ENCODE measurements at regions of chr1 and their contacts with region 1.

Region 1: DNA sequence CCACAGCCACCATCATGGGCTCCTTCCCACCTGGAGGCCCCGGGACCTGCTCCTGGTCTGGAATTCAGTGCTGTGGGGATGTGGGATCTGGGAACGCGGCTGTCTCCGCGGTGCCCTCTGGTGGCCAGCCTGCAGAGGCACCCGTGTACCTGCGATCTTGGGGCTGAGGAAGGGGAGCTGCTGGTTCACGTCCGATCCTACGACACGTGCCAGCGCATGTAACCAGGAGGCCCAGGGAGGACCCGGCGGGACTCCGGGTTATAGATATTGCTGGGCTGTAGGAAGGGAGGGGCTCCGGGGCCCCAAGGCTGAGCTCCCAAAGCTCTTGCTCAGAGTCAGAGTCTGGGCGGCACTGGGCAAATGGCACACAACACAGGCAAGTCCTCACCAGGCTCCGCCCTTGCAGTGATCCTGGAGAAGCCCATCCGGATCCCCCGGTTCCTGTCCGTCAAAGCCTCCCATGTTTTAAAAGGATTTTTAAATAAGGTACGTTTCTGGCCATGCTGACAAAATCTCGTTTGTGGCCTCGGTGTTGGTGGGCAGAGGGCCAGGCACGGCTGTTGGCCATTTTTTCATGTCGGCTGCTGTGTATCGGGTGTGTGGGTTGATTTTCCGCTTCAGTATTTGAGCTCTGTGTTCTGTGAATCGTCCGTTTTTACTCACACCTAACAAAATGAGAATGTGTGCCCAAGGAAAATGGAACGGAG is 20.1 kb downstream of the FAAP20 start:
- DNase-seq: peak; percentile 42 to 70 (median 65)
- H3K4me3 ChIP-seq: peak overlapping the region in 1 of 3 experiments; percentile 50
- H3K4me3 Mint-ChIP-seq: peak overlapping the region; percentile 60 to 66
- H3K27ac ChIP-seq: no peak overlapping the region
- H3K27ac Mint-ChIP-seq: peak overlapping the region in 1 of 7 donors; percentile 59
- H3K4me1 ChIP-seq: peaks cover 14 to 15% of the 10 kb centered on the region in 2 donors
- H3K4me1 Mint-ChIP-seq: peaks cover 23% of the 10 kb centered on the region
- H3K27me3 ChIP-seq: no peaks in the 10 kb centered on the region
- H3K27me3 Mint-ChIP-seq: peaks cover 1 to 3% (median 1%) of the 10 kb centered on the region in 3 donors
- CTCF ChIP-seq: peak; percentile 94

Region 2: DNA sequence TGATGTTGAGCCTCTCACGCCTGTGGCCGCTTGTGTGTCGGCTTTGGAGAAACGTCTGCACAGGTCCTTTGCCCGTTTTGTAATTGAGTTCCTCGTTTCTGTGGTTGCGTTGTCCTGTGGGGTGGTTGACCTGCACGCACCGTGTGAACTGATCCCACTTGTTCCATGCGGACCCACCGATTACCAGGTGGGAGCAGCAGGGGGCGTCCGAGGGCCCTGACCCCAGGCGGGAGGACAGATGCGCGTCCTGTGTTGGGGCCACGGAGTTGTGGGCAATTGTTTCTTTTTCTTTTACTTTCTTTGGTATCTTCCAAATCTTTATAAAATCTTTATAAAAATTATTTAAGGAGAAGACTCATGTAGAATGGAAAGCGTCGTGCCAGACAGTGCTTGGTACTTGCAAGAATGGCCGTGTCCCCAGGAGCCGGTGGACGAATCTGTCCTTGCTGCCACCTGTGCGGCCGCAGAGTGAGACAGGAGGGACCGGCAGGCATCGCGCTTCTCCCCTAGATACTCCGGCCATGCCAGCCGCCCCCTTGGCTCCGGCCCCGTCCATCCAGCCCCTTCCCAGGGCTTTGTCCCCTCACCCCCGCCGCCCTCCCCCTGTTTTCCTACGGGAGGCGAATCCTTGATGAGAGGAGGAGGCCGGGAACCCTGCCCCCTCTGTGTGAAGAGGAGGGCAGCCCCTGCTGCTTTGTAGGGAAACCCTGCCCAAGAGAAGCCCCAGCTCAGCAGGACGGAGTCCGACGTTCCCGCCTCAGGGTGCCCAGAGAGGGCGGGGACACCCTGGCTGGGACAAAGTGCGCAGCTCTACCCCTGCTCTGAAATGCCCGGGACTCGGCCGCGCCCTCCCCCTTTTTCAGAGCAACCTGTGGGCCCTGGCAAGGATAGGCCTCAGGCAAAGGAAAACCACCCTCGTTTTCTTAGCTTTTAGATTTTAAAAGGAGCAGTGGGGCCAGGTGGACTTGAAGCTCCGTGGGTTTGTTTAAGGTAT is 82.6 kb before region 1 on chr1:
- intact Hi-C with region 1: loop called in 1 of 2 experiments (anchors 5 kb)
- DNase-seq: peak; percentile 46 to 63 (median 50)
- H3K4me3 ChIP-seq: no peak overlapping the region
- H3K4me3 Mint-ChIP-seq: peak overlapping the region in 1 of 2 donors; percentile 53
- H3K27ac ChIP-seq: no peak overlapping the region
- H3K27ac Mint-ChIP-seq: no peak overlapping the region
- H3K4me1 ChIP-seq: no peaks in the 10 kb centered on the region
- H3K4me1 Mint-ChIP-seq: peaks cover 4% of the 10 kb centered on the region
- H3K27me3 ChIP-seq: no peaks in the 10 kb centered on the region
- H3K27me3 Mint-ChIP-seq: peaks cover 2 to 3% (median 2%) of the 10 kb centered on the region in 3 donors
- CTCF ChIP-seq: peak; percentile 80

Region 3: DNA sequence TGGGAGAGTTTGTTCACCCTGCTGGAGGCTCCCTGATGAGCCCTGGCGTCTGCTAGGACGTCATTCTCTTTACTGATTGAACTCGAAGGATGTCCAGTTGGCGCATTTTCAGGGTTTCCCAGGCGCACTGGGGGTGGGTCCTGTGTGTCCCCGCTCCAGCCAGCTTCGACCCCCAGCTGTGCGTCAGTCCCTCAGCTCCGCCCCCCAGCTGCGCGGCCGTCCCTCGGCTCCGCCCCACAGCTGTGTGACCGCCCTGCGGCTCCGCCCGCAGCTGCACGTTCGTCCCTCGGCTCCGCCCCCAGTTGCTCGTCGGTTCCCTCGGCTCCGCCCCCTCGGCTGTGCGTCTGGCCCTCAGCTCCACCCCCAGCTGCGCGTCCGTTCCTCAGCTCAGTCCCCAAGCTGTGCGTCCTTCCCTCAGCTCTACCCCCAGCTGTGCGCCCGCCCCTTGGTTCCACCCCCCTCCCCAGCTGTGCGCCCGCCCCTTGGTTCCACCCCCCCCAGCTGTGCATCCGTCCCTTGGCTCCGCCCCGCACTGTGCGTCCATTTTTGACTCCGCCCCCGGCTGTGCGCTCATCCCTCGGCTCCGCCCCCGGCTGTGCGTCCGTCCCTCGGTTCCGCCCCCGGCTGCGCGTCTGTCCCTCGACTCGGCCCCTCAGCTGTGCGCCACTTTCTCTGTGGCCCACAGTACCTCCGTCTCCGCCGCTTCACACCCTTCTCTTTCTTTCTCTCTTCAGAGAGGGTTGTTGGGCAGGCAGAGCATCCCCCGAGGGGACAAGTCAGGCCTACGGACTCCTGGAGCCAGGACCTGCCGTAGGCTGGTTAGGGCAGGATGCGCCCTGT is 41.2 kb before region 1 on chr1:
- intact Hi-C with region 1: loop called (anchors 5 kb)
- DNase-seq: peak; percentile 97 to 99 (median 99)
- H3K4me3 ChIP-seq: peak overlapping the region; percentile 36 to 76 (median 40)
- H3K4me3 Mint-ChIP-seq: peak overlapping the region; percentile 81 to 88
- H3K27ac ChIP-seq: peak overlapping the region; percentile 63 to 87
- H3K27ac Mint-ChIP-seq: peak overlapping the region; percentile 93 to 97 (median 95)
- H3K4me1 ChIP-seq: peaks cover 15 to 23% of the 10 kb centered on the region in 2 donors
- H3K4me1 Mint-ChIP-seq: peaks cover 12% of the 10 kb centered on the region
- H3K27me3 ChIP-seq: peaks cover 0 to under 1% of the 10 kb centered on the region in 2 donors
- H3K27me3 Mint-ChIP-seq: peaks cover 7 to 16% (median 13%) of the 10 kb centered on the region in 3 donors
- CTCF ChIP-seq: no peak

Region 4: DNA sequence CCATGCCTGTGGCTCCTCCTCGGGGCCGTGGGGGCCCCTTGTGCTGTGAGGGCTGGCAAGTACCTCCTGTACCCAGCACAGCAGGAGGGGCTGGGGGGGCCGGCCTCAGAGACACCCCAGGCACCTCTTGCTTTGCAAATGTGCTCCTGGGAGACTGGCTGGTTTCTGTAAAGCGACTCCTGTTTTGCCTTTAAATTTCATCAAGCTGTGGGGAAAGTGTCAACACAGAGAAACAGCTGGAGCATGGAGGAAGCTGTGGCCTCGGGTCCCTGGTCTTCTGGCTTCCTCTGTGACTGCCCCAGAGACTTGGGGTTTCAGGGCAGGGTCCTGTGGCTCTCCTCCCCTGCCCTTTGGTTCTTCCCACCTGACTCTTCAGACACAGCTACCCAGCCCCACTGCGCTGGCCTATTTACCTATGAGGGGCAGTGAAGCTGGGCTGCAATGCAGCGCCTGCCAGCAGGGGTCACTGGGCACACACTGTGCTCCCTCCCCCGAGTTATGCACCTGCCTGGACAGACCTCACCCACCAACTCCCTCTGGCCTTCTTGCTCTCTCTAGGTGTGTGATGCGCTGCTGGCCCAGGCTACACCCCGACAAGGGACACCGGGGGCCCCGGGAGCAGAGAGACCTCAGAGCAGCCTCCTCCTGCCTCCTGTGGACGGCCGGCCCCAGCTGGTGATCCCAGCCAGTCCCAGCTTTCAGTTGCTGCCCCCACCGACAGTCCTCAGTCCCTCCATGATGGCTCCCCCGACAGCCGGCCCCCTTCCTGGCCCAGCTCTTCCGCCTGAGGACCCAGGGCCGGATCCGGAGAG is 255.5 kb after region 1 on chr1:
- intact Hi-C with region 1: no loop called
- DNase-seq: no peak
- H3K4me3 ChIP-seq: no peak overlapping the region
- H3K4me3 Mint-ChIP-seq: no peak overlapping the region
- H3K27ac ChIP-seq: no peak overlapping the region
- H3K27ac Mint-ChIP-seq: no peak overlapping the region
- H3K4me1 ChIP-seq: no peaks in the 10 kb centered on the region
- H3K4me1 Mint-ChIP-seq: no peaks in the 10 kb centered on the region
- H3K27me3 ChIP-seq: no peaks in the 10 kb centered on the region
- H3K27me3 Mint-ChIP-seq: peaks cover 6 to 17% (median 9%) of the 10 kb centered on the region in 3 donors
- CTCF ChIP-seq: peak; percentile 25

Measured in CD14-positive monocyte (primary cell).